Endothelial cell of umbilical vein (primary cell): ENCODE measurements at regions of chr5 and their contacts with region 1.

Region 1: GRCh38 chr5:143968011-143968878 is 156.3 kb downstream of the HMHB1 start:
- DNase-seq: peak; percentile 54
- H3K4me3 ChIP-seq: no peak overlapping the region
- H3K27ac ChIP-seq: no peak overlapping the region
- H3K4me1 ChIP-seq: peaks cover 9% of the 10 kb centered on the region
- H3K27me3 ChIP-seq: no peaks in the 10 kb centered on the region
- CTCF ChIP-seq: peak in 1 of 2 donors; percentile 18
- POLR2A ChIP-seq: no peak

Region 2: GRCh38 chr5:143016777-143017516 is 951.3 kb before region 1 on chr5:
- CTCF ChIA-PET with region 1: no interaction called
- POLR2A ChIA-PET with region 1: no interaction called
- dilution Hi-C with region 1: no loop called
- intact Hi-C with region 1: loop called (anchors 5 kb)
- DNase-seq: peak; percentile 67
- H3K4me3 ChIP-seq: no peak overlapping the region
- H3K27ac ChIP-seq: no peak overlapping the region
- H3K4me1 ChIP-seq: no peaks in the 10 kb centered on the region
- H3K27me3 ChIP-seq: no peaks in the 10 kb centered on the region
- CTCF ChIP-seq: peak; percentile 62 to 63
- POLR2A ChIP-seq: no peak

Region 3: DNA sequence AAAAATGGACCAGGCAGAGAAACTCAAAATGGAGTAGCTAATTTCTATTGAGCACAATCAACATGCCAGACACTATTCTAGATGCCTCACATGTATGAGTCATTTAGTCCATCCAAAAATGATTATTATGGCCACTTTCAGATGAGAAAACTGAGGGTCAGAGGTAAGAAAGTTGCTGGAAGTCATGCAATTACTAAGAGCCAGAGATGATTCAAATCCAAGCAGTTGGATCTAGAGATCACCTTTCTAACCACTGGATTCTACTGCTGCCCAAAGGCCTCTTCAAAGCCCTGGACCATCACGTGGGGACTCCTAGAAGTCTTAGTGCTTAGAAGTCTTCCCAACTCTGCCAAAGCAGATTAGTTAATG is 208.1 kb before region 1 on chr5:
- CTCF ChIA-PET with region 1: no interaction called
- POLR2A ChIA-PET with region 1: no interaction called
- dilution Hi-C with region 1: no loop called
- intact Hi-C with region 1: no loop called
- DNase-seq: no peak
- H3K4me3 ChIP-seq: no peak overlapping the region
- H3K27ac ChIP-seq: no peak overlapping the region
- H3K4me1 ChIP-seq: no peaks in the 10 kb centered on the region
- H3K27me3 ChIP-seq: no peaks in the 10 kb centered on the region
- CTCF ChIP-seq: no peak
- POLR2A ChIP-seq: no peak

Region 4: DNA sequence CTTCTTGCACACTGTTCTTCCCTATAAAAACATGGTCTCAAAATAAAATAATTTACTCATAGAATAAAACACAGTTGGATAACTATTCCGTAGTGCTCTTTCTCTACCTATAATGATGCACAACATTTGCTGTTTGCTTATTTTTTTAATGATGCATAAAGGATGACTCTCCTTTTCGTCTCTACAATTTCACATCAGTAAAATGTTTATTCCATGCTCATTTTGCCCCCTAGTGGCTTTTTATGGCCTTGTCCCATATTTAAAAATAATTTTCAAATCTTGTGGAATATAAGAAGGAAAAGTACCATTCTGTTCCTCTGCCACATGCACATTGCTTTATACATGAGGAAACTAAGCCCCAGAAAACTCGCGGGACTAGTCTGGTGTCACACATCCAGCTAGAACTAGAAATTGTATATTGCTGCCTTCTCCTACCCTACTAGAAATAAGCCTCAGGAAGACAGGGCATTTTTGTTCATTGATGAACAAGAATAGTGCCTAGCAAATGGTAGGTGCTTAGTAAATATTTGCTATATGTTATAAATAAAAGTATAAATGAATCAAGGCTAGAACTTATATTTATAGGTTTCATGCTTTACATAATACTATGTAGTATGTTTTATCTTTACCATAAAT is 215.1 kb after region 1 on chr5:
- CTCF ChIA-PET with region 1: no interaction called
- POLR2A ChIA-PET with region 1: no interaction called
- dilution Hi-C with region 1: no loop called
- intact Hi-C with region 1: loop called (anchors 5 kb)
- DNase-seq: peak; percentile 75
- H3K4me3 ChIP-seq: no peak overlapping the region
- H3K27ac ChIP-seq: peak overlapping the region; percentile 40
- H3K4me1 ChIP-seq: peaks cover 24% of the 10 kb centered on the region
- H3K27me3 ChIP-seq: no peaks in the 10 kb centered on the region
- CTCF ChIP-seq: peak; percentile 45 to 53
- POLR2A ChIP-seq: no peak

Region 5: GRCh38 chr5:144328494-144328893 is 360.2 kb after region 1 on chr5:
- CTCF ChIA-PET with region 1: no interaction called
- POLR2A ChIA-PET with region 1: no interaction called
- dilution Hi-C with region 1: no loop called
- intact Hi-C with region 1: no loop called
- DNase-seq: no peak
- H3K4me3 ChIP-seq: no peak overlapping the region
- H3K27ac ChIP-seq: no peak overlapping the region
- H3K4me1 ChIP-seq: no peaks in the 10 kb centered on the region
- H3K27me3 ChIP-seq: no peaks in the 10 kb centered on the region
- CTCF ChIP-seq: no peak
- POLR2A ChIP-seq: no peak